CD4-positive, alpha-beta memory T cell (primary cell): ENCODE measurements at regions of chr11 and their contacts with region 1.

Region 1: DNA sequence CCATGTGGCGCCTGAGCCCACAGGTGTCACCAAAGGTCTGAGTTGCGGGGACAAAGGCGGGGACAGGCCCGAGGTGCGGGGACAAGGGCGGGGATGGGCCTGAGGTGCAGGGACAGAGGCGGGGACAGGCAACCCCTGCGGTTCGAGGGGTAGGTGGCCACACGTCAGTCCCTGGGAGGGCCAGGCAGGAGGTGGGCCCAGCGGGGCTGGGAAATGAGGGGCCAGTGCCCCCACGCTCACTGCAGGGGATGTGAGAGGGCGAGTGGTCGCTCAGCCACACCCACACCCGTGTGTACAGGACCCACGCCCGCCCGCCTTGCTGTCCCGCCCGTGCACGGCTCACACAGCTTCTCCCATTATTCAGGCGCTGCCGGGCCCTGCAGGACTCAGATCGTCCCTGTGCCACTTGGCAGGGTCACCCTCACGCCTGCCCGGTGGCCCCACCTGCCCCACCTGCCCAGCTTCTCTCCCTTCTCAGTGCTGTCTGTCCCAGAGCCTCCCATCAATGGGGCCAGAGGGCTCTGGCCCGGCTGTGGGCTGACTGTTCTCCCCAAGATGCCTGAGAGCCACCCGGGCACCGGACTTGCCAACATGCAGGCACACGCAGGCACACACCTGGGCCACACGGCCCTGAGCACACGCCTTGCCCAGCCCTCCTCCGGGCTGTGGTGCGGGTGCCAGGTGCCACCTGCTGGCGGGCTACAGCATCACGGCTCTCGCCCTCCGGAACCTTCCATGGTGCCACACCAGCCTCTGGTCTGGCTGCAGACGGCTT is 14.2 kb upstream of the MUC6 start:
- DNase-seq: peak; percentile 58 to 72 (median 70)
- H3K4me3 ChIP-seq: no peak overlapping the region
- H3K4me3 Mint-ChIP-seq: no peak overlapping the region
- H3K27ac ChIP-seq: no peak overlapping the region
- H3K27ac Mint-ChIP-seq: peak overlapping the region in 1 of 7 donors; percentile 36
- H3K4me1 ChIP-seq: peaks cover 4% of the 10 kb centered on the region
- H3K4me1 Mint-ChIP-seq: peaks cover 0 to 9% (median under 1%) of the 10 kb centered on the region in 4 donors
- H3K27me3 ChIP-seq: no peaks in the 10 kb centered on the region
- H3K27me3 Mint-ChIP-seq: peaks cover 6 to 12% of the 10 kb centered on the region in 2 donors

Region 2: DNA sequence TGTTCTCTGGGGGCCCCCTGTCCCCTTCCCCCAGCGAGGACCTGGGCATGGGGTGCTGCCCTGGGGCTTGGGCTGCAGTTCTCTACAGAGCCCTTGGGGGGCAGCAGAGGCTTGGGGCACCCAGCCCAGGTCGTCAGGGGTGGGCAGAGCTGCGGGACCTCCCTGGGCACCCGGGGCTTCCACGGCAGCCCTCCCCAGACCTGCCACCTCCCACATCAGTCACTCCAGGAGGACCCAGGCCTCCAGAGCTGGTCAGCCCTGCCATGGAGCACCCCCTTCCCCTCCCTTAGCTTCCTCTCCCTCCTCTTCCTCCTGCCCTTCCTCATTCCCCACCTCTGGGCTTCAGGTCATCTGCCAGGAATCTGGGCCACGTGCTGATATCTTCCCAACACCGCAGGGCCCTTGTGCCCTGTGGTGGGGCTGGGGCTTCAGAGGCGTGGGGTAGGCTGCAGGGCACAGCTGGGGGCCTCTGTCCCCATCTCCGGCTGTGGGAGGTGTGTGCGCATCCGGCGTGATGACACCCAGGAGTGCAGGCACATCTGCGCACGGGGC is 202.3 kb before region 1 on chr11:
- CTCF ChIA-PET with region 1: interaction called, 35 read pairs
- POLR2A ChIA-PET with region 1: interaction called, 6 read pairs
- intact Hi-C with region 1: no loop called
- DNase-seq: peak; percentile 59 to 70 (median 62)
- H3K4me3 ChIP-seq: no peak overlapping the region
- H3K4me3 Mint-ChIP-seq: peak overlapping the region in 7 of 8 donors; percentile 26 to 77 (median 62)
- H3K27ac ChIP-seq: no peak overlapping the region
- H3K27ac Mint-ChIP-seq: peak overlapping the region in 1 of 7 donors; percentile 16
- H3K4me1 ChIP-seq: peaks cover 17% of the 10 kb centered on the region
- H3K4me1 Mint-ChIP-seq: peaks cover 2 to 19% (median 8%) of the 10 kb centered on the region in 4 donors
- H3K27me3 ChIP-seq: peaks cover 10% of the 10 kb centered on the region
- H3K27me3 Mint-ChIP-seq: peaks cover 4% of the 10 kb centered on the region in 2 donors

Region 3: GRCh38 chr11:1060824-1061616 is 10.3 kb after region 1 on chr11:
- CTCF ChIA-PET with region 1: no interaction called
- POLR2A ChIA-PET with region 1: no interaction called
- intact Hi-C with region 1: no loop called
- DNase-seq: no peak
- H3K4me3 ChIP-seq: no peak overlapping the region
- H3K4me3 Mint-ChIP-seq: no peak overlapping the region
- H3K27ac ChIP-seq: no peak overlapping the region
- H3K27ac Mint-ChIP-seq: no peak overlapping the region
- H3K4me1 ChIP-seq: no peaks in the 10 kb centered on the region
- H3K4me1 Mint-ChIP-seq: peaks cover 0 to 11% (median 6%) of the 10 kb centered on the region in 4 donors
- H3K27me3 ChIP-seq: peaks cover 3% of the 10 kb centered on the region
- H3K27me3 Mint-ChIP-seq: peaks cover 4 to 16% of the 10 kb centered on the region in 2 donors

Region 4: DNA sequence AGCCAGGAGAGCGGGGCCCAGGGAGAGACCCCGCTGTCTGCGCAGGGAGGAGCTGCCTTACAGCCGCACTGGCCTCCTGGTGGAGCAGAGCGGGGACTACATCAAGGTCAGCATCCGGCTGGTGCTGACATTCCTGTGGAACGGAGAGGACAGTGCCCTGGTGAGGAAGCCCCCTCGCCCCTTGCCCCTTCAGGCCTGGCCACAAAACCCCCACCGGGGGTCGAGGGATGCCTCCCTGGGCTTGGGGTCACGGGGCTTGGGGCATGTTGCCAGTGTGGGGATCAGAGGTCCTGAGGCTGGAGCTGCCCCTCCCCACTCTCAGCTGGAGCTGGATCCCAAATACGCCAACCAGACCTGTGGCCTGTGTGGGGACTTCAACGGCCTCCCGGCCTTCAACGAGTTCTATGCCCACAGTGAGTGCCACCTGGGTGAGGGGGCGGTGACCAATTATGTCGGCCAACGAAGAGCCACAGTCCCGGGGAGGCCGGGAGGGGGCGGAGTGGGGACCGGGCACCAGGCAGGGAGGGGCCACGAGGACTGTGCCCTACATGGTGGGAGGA is 176.3 kb after region 1 on chr11:
- CTCF ChIA-PET with region 1: no interaction called
- POLR2A ChIA-PET with region 1: no interaction called
- intact Hi-C with region 1: no loop called
- DNase-seq: peak in 1 of 5 donors; percentile 12
- H3K4me3 ChIP-seq: no peak overlapping the region
- H3K4me3 Mint-ChIP-seq: no peak overlapping the region
- H3K27ac ChIP-seq: no peak overlapping the region
- H3K27ac Mint-ChIP-seq: no peak overlapping the region
- H3K4me1 ChIP-seq: no peaks in the 10 kb centered on the region
- H3K4me1 Mint-ChIP-seq: no peaks in the 10 kb centered on the region
- H3K27me3 ChIP-seq: no peaks in the 10 kb centered on the region
- H3K27me3 Mint-ChIP-seq: peaks cover 0 to 2% of the 10 kb centered on the region in 2 donors